ENCODE measurements at regions of chr14 and their contacts with region 1.

Region 1: DNA sequence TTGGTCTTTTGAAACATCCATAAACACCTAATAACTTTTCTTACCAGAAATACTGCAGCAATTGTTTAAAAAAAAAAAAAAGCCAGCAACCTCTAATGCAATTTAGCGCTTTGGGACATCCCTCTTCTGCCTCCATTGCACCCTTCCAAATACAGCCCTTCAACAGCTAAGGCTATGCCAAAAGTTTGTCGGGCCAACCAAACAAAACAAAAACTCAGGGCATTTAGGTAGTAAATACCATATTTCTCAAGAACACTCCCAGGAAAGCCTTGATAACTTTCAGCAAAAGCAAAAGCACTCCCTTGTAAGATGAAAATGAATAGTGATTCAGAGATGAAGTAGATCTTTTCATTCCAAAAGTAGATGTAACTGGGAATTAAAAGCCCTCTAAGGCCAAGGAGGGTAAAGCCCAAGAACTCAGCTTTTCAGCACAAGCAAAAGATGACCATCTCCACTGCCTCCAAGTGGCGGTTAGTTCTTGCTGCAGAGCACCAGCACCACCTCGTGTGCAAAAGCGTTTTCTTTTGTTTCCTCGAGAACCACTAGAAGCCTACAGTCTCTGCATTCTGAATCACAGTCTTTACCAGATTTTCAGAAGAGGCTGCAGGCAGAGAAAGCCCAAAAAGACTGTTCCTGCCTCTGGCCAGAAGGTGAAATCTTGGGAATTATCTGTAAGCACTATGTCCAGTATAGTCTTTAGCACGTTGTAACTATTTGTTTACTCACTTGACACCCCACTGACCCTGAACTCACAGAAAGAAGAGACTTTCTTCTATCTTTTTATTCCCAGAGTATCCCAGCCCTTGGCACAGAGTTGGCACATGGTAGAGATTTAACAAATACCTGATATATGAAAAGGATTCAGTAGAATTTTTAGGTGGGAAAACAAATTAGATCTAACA is 53.1 kb downstream of the SIX6 start:
- DNase-seq: peak; percentile 69

Region 2: DNA sequence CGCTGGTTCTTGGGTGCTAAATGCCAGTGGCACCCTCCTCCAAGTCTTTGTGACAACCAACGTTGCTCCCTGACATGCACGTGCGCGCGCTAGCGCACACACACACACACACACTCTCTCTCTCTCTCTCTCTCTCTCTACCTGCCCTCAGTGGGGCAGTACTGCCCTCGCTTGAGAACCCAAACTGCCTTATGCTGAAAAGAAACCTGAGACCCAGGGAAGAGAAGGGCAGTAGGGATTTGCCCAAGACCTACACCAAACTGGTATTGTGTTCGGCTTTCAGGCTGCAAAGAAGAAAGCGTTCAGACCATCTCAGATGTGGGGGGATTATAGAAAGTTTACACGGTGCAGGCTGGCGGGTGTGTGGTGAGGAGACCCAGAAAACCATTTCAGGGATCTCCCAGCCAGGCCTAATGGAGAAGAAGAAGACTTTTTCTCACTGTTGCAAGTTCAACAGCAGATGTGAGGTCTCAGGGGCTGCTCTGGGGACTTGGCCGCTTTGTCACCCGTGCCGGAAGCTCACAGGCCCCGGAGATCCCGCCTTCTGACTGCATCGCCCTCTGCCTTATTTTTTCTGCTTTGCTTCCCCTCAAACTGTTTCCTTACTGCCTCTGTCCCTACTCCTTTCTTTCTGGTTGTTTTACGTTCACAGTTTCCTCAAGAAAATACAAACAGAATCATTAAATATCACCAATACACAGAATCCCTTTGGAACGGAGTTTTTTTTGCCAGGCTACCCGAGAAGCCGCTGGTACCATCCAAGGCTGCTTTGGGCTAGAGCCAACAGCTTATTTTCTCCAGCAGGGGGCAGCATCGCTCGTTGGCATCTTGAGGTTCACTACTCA is 230.7 kb before region 1 on chr14:
- CTCF ChIA-PET with region 1: interaction called, 13 read pairs
- POLR2A ChIA-PET with region 1: no interaction called
- DNase-seq: peak; percentile 71

Region 3: GRCh38 chr14:60349663-60350365 is 212.3 kb before region 1 on chr14:
- CTCF ChIA-PET with region 1: interaction called, 39 read pairs
- POLR2A ChIA-PET with region 1: no interaction called
- DNase-seq: peak; percentile 58

Region 4: GRCh38 chr14:60488175-60488574 is 73.9 kb before region 1 on chr14:
- CTCF ChIA-PET with region 1: interaction called, 10 read pairs
- POLR2A ChIA-PET with region 1: no interaction called
- DNase-seq: no peak

Region 5: DNA sequence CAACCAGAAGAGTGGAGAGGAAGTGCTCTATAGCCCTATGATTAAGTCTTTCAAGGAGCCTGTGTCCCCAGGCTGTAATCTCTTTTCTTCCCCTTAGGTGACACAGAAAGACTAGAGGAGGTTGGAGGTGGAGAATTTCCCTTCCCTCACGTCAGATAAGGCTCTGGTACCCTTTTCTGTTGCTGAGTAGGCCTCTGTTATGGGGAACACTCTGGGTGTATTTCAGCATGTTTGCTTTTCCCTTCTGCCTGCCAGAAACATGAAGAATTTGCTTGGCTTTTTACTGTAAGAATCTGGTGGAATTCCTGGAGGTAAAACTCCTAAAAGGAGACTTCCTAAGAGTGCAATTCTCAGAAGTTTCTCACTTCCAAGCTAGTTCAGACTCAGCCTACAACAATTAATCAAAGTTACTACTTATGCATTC is 28.9 kb after region 1 on chr14:
- CTCF ChIA-PET with region 1: no interaction called
- POLR2A ChIA-PET with region 1: no interaction called
- DNase-seq: no peak

Measured in HEK293T (cell line).